Activated B cell treated with CpG ODN at 0.5 μM for 24 hours (primary cell): ENCODE measurements at regions of chr5 and their contacts with region 1.

Region 1: DNA sequence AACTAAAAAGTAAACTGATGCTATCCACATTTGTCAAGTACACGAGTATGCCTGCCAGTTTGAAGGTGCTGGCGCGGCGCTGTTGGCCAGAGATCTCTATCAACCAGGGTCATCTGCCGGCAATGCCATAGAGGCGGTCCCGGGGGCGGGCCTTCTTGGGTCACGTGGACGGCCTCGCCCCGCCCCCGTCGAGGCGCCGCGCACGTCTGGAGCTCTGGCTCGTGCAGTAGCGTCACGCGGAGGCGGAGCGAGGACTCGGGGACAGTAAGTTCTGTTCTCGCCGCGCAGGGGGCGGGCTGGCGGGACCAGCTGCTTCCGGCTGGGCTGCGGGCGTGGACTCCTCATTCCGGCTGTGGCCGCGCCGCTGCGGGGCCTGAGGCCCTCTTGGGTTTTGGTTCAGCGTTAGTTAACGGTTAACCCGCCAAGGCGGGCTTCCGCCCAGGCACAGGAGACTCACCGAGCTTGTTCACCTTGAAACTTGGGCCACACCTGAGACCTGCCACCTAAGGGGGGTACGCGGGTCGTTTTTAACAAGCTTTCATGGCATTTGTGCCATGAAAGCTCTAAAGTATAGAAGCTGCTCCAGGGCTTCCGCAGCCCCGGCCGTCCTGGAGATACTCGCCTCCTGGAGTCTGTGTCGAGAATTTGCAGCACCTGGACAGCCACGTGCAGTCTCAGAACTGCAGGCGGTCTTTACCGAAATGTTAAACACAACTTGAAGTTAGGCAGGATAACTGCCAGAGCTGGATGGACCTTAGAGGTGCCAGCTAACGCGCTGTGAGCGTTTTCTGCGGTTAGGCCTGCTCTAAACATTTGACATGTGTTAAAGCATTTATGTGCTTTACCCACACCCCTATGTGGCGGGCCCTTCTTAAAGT is at the start of gene RFESD:
- DNase-seq: peak; percentile 97
- ATAC-seq: peak; percentile 96
- H3K4me3 Mint-ChIP-seq: peak within 1 kb of the TSS; percentile 86
- H3K27ac Mint-ChIP-seq: peak within 1 kb of the TSS; percentile 87
- H3K4me1 Mint-ChIP-seq: peaks cover 26% of the 10 kb centered on the region
- H3K27me3 Mint-ChIP-seq: no peaks in the 10 kb centered on the region
- CTCF ChIP-seq: no peak
- total RNA-seq, gene RFESD: 1.8 and 2.4 TPM in 2 replicates

Region 2: DNA sequence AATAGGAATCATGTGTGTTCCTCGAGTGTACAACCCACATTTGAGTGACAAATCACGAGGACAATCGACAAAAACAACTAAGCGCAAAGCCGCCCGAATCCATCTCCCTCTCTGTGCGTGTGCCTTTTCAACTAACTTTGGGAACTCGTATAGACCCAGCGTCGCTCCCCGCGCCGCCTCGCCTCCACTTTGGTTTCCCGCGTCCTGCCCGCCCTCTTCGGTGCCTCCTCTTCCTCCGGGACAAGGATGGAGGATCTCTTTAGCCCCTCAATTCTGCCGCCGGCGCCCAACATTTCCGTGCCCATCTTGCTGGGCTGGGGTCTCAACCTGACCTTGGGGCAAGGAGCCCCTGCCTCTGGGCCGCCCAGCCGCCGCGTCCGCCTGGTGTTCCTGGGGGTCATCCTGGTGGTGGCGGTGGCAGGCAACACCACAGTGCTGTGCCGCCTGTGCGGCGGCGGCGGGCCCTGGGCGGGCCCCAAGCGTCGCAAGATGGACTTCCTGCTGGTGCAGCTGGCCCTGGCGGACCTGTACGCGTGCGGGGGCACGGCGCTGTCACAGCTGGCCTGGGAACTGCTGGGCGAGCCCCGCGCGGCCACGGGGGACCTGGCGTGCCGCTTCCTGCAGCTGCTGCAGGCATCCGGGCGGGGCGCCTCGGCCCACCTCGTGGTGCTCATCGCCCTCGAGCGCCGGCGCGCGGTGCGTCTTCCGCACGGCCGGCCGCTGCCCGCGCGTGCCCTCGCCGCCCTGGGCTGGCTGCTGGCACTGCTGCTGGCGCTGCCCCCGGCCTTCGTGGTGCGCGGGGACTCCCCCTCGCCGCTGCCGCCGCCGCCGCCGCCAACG is 26.5 kb before region 1 on chr5 and contains the start of gene GPR150:
- CTCF ChIA-PET with region 1: interaction called, 4 read pairs
- POLR2A ChIA-PET with region 1: interaction called, 20 read pairs
- intact Hi-C with region 1: loop called (anchors 1 kb)
- DNase-seq: peak; percentile 69
- ATAC-seq: peak; percentile 80
- H3K4me3 Mint-ChIP-seq: peak within 1 kb of the TSS; percentile 88
- H3K27ac Mint-ChIP-seq: peak within 1 kb of the TSS; percentile 62
- H3K4me1 Mint-ChIP-seq: peaks cover 28% of the 10 kb centered on the region
- H3K27me3 Mint-ChIP-seq: no peaks in the 10 kb centered on the region
- CTCF ChIP-seq: no peak
- total RNA-seq, gene GPR150: 0.60 and 1.1 TPM in 2 replicates

Region 3: GRCh38 chr5:95730730-95731570 is 84.2 kb after region 1 on chr5 and contains the start of gene RHOBTB3:
- CTCF ChIA-PET with region 1: interaction called, 4 read pairs
- POLR2A ChIA-PET with region 1: interaction called, 6 read pairs
- intact Hi-C with region 1: loop called (anchors 2 kb)
- DNase-seq: peak; percentile 52
- ATAC-seq: peak; percentile 73
- H3K4me3 Mint-ChIP-seq: peak within 1 kb of the TSS; percentile 87
- H3K27ac Mint-ChIP-seq: peak within 1 kb of the TSS; percentile 61
- H3K4me1 Mint-ChIP-seq: peaks cover 34% of the 10 kb centered on the region
- H3K27me3 Mint-ChIP-seq: peaks cover 18% of the 10 kb centered on the region
- CTCF ChIP-seq: no peak
- total RNA-seq, gene RHOBTB3: 3.3 and 5.0 TPM in 2 replicates

Region 4: DNA sequence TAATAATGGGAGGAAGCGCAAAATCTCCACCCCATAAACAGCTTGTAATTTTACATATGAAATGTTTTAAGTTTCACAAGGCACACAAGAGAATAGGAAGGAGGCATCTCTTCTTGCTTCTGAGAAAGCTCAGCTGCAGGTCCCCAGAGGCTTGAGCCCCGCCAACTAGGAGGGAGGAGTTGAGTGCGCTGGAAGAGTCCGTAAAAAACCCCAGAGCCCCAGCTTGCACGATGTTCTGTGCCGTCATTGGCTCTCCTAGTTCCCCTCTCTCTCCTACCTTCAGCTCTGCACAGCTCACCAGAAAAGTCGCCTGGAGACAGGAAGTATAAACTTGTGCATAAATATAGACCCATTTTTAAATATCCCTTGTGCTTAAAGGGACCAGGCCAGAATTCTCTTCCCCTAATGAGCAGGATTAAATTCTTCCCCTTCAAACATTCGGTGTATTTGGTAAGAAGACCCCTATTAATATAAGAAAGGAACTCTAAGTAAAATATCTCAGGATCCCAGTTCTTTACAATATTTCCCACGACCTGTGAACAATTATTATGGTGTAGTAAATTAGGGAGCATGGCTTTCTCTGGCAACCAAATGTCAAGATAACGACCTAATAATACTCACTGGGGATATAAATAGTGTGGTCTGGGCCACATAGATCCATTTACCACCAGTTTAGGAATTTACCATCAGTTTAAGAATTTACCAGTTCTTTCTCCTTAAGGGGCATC is 162.1 kb after region 1 on chr5:
- CTCF ChIA-PET with region 1: interaction called, 4 read pairs
- POLR2A ChIA-PET with region 1: interaction called, 7 read pairs
- intact Hi-C with region 1: loop called (anchors 1 kb)
- DNase-seq: peak; percentile 72
- ATAC-seq: peak; percentile 99
- H3K4me3 Mint-ChIP-seq: peak overlapping the region; percentile 77
- H3K27ac Mint-ChIP-seq: peak overlapping the region; percentile 95
- H3K4me1 Mint-ChIP-seq: peaks cover 56% of the 10 kb centered on the region
- H3K27me3 Mint-ChIP-seq: no peaks in the 10 kb centered on the region
- CTCF ChIP-seq: no peak

Region 5: GRCh38 chr5:95846554-95847260 is 199.9 kb after region 1 on chr5:
- CTCF ChIA-PET with region 1: interaction called, 26 read pairs
- POLR2A ChIA-PET with region 1: interaction called, 4 read pairs
- intact Hi-C with region 1: loop called (anchors 1 kb)
- DNase-seq: peak; percentile 45
- ATAC-seq: peak; percentile 80
- H3K4me3 Mint-ChIP-seq: no peak overlapping the region
- H3K27ac Mint-ChIP-seq: no peak overlapping the region
- H3K4me1 Mint-ChIP-seq: peaks cover 11% of the 10 kb centered on the region
- H3K27me3 Mint-ChIP-seq: no peaks in the 10 kb centered on the region
- CTCF ChIP-seq: peak; percentile 82

Region 6: DNA sequence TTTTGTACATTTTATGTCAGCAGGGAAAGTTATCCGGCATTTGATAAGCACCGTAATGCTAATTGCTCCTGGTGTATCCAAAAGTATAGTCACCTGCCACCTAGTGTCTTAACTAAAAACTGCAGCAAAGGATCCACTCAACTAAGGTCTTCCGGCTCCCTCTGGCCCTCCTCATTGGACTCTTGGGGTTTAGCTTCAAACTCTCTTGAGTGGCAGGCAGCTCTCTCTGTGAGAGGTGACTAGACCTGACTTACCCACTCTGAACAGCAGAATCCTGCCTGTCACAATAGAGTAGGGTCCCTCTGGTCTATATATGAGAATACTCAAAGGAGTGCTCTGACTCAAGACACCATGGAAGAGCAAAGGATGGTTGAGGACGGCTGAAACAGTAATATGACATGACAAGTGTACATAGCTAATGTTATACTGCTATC is 955.0 kb after region 1 on chr5:
- CTCF ChIA-PET with region 1: interaction called, 3 read pairs
- POLR2A ChIA-PET with region 1: no interaction called
- intact Hi-C with region 1: loop called (anchors 1 kb)
- DNase-seq: no peak
- ATAC-seq: peak; percentile 75
- H3K4me3 Mint-ChIP-seq: no peak overlapping the region
- H3K27ac Mint-ChIP-seq: no peak overlapping the region
- H3K4me1 Mint-ChIP-seq: no peaks in the 10 kb centered on the region
- H3K27me3 Mint-ChIP-seq: no peaks in the 10 kb centered on the region
- CTCF ChIP-seq: peak; percentile 45